Psoas muscle (tissue), 8 donors: ENCODE measurements at regions of chr2 and their contacts with region 1.

Region 1: GRCh38 chr2:212073347-212073746 is 465.3 kb downstream of the ERBB4 start:
- DNase-seq: no peak
- ATAC-seq: no peak
- H3K4me3 ChIP-seq: no peak overlapping the region
- H3K27ac ChIP-seq: no peak overlapping the region
- H3K4me1 ChIP-seq: no peaks in the 10 kb centered on the region
- H3K27me3 ChIP-seq: no peaks in the 10 kb centered on the region
- CTCF ChIP-seq: no peak

Region 2: DNA sequence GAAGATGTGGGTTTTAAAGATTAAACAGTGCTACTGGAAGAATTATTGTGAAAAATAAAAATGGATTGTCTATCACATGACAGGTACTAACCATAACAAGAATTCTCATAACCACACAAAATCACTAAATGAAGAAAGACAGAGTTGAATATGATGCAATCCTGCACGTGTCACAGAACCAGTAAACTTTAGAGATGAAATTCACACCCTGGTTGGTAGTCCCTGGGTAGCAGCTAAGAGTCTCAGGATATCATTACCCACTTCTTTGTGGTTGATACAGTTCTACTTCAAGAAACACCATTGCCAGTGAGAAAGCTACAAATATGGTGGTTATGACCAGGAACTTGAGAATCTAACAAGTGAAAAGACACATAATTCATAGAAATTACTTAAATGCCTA is 15.0 kb after region 1 on chr2:
- intact Hi-C with region 1: loop called in 1 of 2 experiments (anchors 2 kb)
- DNase-seq: no peak
- ATAC-seq: no peak
- H3K4me3 ChIP-seq: no peak overlapping the region
- H3K27ac ChIP-seq: no peak overlapping the region
- H3K4me1 ChIP-seq: no peaks in the 10 kb centered on the region
- H3K27me3 ChIP-seq: no peaks in the 10 kb centered on the region
- CTCF ChIP-seq: no peak

Region 3: GRCh38 chr2:212098966-212099365 is 25.6 kb after region 1 on chr2:
- intact Hi-C with region 1: no loop called
- DNase-seq: no peak
- ATAC-seq: no peak
- H3K4me3 ChIP-seq: no peak overlapping the region
- H3K27ac ChIP-seq: no peak overlapping the region
- H3K4me1 ChIP-seq: no peaks in the 10 kb centered on the region
- H3K27me3 ChIP-seq: peaks cover 0 to 2% (median 0%) of the 10 kb centered on the region in 3 donors
- CTCF ChIP-seq: no peak